ENCODE measurements at regions of chr12 and their contacts with region 1.

Region 1: DNA sequence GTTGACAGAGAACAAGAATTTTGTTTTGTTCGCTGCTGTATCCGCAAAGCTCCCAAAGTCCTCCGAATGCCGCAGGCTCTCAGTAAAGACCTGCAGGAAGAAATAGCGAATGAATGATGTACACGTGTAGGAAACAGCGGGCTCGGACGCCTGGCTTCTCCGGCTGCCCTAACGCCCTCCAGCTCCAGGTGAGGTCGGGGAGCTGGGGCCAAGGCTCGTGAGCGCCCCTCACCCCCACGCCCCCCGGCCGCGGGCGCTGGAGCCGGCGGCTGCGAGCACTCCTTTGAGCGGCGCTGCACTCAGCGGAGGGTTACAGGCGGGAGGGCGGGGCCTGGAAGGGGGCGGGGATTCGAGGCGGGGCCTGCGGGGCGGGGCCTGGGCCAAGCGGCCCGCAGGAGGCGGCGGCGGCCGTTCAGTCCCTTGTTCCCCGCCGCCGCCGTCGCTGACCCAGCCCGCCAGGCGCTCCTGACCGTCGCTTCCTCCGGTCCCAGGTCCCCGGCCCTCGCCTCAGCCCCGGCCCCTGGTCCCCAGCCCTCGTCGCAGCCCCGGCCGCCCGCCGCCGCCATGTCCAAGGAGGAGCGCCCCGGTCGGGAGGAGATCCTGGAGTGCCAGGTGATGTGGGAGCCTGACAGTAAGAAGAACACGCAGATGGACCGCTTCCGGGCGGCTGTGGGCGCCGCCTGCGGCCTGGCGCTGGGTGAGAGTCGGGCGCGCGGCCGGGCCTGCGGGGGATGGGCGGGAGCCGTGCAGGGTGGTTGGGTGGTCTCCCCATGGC is at the start of gene AACS:
- DNase-seq: peak; percentile 89
- H3K4me3 Mint-ChIP-seq: peak within 1 kb of the TSS; percentile 82
- H3K27ac Mint-ChIP-seq: peak within 1 kb of the TSS; percentile 53
- H3K4me1 Mint-ChIP-seq: peaks cover 14% of the 10 kb centered on the region
- H3K27me3 Mint-ChIP-seq: peaks cover 17% of the 10 kb centered on the region
- total RNA-seq, gene AACS: 24.7 and 26.7 TPM in 2 replicates

Region 2: GRCh38 chr12:125049093-125049458 is 16.1 kb before region 1 on chr12:
- intact Hi-C with region 1: loop called (anchors 1 kb)
- DNase-seq: no peak
- H3K4me3 Mint-ChIP-seq: peak overlapping the region; percentile 89
- H3K27ac Mint-ChIP-seq: peak overlapping the region; percentile 66
- H3K4me1 Mint-ChIP-seq: peaks cover 4% of the 10 kb centered on the region
- H3K27me3 Mint-ChIP-seq: no peaks in the 10 kb centered on the region

Measured in activated CD4-positive, alpha-beta T cell treated with anti-CD3 and anti-CD28 coated beads, Interleukin-2, amount 10 ng/mL, durations not matched to agents 24 days and 14 days (primary cell).